PC-3 (cell line): ENCODE measurements at regions of chr5 and their contacts with region 1.

Region 1: GRCh38 chr5:54835647-54836046 is 149.7 kb downstream of the ESM1 start:
- DNase-seq: peak; percentile 4
- ATAC-seq: no peak; the same call in 1 of the 2 replicates
- H3K4me3 ChIP-seq: no peak overlapping the region
- H3K27ac ChIP-seq: no peak overlapping the region
- H3K4me1 ChIP-seq: no peaks in the 10 kb centered on the region
- H3K27me3 ChIP-seq: no peaks in the 10 kb centered on the region
- CTCF ChIP-seq: no peak

Region 2: GRCh38 chr5:54727874-54728587 is 107.6 kb before region 1 on chr5:
- CTCF ChIA-PET with region 1: no interaction called
- POLR2A ChIA-PET with region 1: no interaction called
- intact Hi-C with region 1: no loop called
- DNase-seq: no peak
- ATAC-seq: no peak
- H3K4me3 ChIP-seq: no peak overlapping the region
- H3K27ac ChIP-seq: no peak overlapping the region
- H3K4me1 ChIP-seq: peaks cover 7% of the 10 kb centered on the region; the same call in 1 of the 2 replicates
- H3K27me3 ChIP-seq: no peaks in the 10 kb centered on the region
- CTCF ChIP-seq: no peak

Region 3: DNA sequence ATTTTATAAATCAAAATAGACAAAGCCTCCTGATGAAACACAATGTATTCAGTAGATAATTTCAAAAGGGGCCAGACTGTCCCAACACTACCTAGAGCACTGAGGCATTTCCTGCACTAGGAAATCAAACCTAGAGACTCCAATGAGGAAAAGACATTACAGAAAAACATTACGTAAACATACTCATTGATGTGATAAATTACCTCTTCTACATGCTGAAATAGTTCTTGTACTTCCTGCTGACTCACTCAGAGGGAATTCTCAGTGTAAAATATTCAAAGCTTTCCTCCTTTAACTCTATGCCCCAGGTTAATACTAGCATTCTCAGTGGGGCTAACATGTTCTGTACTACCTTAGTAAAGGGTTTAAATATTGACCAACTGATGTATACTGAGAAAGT is 28.2 kb before region 1 on chr5:
- CTCF ChIA-PET with region 1: no interaction called
- POLR2A ChIA-PET with region 1: no interaction called
- intact Hi-C with region 1: loop called (anchors 1 kb)
- DNase-seq: peak; percentile 32
- ATAC-seq: peak; percentile 66
- H3K4me3 ChIP-seq: no peak overlapping the region
- H3K27ac ChIP-seq: no peak overlapping the region
- H3K4me1 ChIP-seq: 0 out of 2 replicates have a peak, but pooled peaks cover 5% of the 10 kb centered on the region
- H3K27me3 ChIP-seq: no peaks in the 10 kb centered on the region
- CTCF ChIP-seq: no peak

Region 4: GRCh38 chr5:54820346-54821134 is 15.1 kb before region 1 on chr5:
- CTCF ChIA-PET with region 1: no interaction called
- POLR2A ChIA-PET with region 1: no interaction called
- intact Hi-C with region 1: no loop called
- DNase-seq: no peak
- ATAC-seq: no peak
- H3K4me3 ChIP-seq: no peak overlapping the region
- H3K27ac ChIP-seq: no peak overlapping the region
- H3K4me1 ChIP-seq: no peaks in the 10 kb centered on the region
- H3K27me3 ChIP-seq: no peaks in the 10 kb centered on the region
- CTCF ChIP-seq: no peak

Region 5: DNA sequence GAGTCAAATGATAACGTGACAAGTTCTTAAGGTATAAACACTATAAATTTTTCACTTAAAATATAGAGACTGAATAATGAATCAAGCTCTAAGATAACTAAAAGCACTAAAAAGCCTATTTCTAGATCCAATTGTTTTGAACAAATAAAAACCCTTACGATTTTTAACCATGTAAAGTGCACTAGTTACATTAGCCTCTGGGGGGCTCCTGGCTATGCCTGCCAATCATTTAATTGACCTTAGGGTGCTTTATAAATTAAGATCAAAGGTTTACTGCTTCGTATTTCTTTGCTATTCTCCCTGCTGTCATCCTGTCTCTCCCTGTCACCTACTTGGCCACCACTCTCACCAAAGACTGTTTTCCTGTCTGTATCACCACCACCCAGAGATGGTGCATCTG is 16.4 kb after region 1 on chr5:
- CTCF ChIA-PET with region 1: no interaction called
- POLR2A ChIA-PET with region 1: no interaction called
- intact Hi-C with region 1: no loop called
- DNase-seq: no peak
- ATAC-seq: no peak
- H3K4me3 ChIP-seq: no peak overlapping the region
- H3K27ac ChIP-seq: no peak overlapping the region
- H3K4me1 ChIP-seq: no peaks in the 10 kb centered on the region
- H3K27me3 ChIP-seq: no peaks in the 10 kb centered on the region
- CTCF ChIP-seq: no peak; the same call in 1 of the 2 replicates